ENCODE measurements at regions of chr11 and their contacts with region 1.

Region 1: GRCh38 chr11:57456960-57457642 is 3.2 kb upstream of the RTN4RL2 start:
- DNase-seq: peak; percentile 93
- H3K4me3 Mint-ChIP-seq: peak overlapping the region; percentile 62
- H3K27ac Mint-ChIP-seq: peak overlapping the region; percentile 29
- H3K4me1 Mint-ChIP-seq: peaks cover 26% of the 10 kb centered on the region
- H3K27me3 Mint-ChIP-seq: peaks cover 52% of the 10 kb centered on the region

Region 2: DNA sequence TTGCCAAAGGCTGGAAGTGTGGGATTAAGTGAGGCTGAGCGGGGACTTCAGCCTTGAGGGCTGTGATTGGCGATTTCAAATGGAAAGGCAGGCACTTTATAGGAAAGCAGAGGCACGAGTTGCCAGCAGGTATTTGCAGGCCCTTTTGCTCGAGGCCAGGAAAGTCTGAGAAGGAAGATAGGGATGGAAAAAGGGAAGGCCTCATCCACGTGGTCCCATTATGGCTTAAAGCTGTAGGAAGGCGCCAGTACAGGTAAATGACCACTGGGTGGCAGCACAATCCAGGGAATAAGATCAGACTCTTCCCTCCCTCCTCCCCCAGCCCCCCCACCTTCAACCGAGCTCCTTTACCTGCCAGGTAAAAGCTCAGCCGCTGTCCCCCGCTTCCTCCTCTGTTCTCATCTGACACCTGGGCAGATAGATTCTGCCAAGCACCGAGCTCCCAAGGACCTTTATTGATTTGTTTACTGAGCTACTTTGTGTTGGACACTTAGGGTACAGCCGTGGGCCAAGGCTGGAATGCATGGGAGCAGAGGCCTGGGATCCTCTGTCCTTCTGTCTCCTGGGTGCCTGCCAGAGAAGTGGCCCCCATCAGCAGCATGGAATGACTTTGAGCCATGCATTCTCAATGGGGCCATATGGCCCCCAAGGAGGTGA is 111.4 kb before region 1 on chr11:
- intact Hi-C with region 1: loop called (anchors 1 kb)
- DNase-seq: peak; percentile 89
- H3K4me3 Mint-ChIP-seq: no peak overlapping the region
- H3K27ac Mint-ChIP-seq: no peak overlapping the region
- H3K4me1 Mint-ChIP-seq: peaks cover 7% of the 10 kb centered on the region
- H3K27me3 Mint-ChIP-seq: peaks cover 16% of the 10 kb centered on the region

Region 3: DNA sequence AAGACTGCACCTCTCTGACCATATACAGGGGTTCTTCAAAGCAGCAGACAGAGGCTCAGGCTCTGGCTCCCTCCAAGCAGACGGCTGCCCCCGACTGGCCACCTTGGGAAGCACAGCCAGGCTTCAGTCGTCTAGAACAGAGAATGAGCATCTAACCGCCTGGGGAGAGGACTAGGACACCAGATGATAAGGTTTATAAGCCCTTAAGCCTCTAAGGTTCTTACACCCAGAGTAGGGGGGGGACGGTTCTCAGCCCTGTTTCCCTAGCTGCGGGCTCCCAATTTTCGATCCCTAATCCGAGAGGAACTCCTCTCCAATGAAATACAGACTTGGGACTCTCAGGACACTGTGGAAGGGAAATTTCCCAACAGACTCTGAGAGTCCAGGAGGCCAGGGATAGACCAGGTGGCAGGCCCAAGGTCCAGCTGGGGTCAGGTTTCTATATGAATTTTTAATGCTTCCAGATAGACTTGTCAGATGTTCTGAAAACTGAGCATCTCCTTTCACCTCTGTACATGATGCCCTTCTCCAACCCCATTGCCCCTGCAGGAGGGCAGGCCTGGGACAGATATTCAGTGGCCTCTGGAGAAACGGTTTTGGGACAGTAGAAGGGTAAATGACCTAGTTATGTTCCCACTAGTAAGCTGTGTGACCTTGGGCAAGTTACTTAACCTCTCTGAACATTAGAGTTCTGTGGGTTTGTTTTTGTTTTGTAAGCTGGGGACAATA is 23.5 kb after region 1 on chr11:
- intact Hi-C with region 1: loop called (anchors 1 kb)
- DNase-seq: peak; percentile 92
- H3K4me3 Mint-ChIP-seq: no peak overlapping the region
- H3K27ac Mint-ChIP-seq: no peak overlapping the region
- H3K4me1 Mint-ChIP-seq: peaks cover 8% of the 10 kb centered on the region
- H3K27me3 Mint-ChIP-seq: peaks cover 52% of the 10 kb centered on the region

Region 4: DNA sequence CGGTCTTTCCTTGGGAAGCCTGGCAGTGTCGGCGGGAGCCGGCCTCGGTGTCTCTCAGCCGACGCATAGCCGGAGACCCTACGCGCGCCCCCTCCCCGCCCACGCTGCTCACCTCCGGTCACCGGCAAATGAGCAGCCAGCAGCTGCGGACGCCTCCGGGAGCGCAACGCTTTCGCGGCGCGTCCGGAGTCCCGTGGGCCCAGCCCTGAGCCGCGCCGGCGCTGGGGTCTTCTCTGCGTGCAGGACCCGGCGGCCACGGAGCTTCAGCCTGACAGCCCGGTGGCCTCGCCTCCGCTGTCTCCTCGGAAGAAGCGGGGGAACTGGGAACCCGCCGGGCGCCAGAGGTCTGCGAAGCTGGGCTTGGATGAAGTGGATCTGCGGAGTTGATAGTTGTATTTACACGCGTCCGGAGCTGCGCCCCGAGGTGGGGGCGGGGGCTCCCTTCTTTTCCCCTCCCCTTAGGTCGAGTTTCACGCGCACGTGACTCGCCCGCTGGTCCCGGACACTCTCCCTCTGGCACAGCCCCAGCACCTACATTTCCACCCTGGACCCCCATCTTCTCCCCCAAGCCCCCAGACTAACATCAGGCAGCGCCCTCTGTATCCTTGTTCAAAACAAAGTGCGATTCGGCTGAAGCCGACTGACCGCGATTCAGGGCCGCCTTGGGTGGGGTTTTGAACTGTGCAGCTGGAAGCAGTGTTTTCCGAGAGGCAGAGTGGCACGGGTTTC is 58.4 kb after region 1 on chr11 and contains the start of gene SLC43A1:
- intact Hi-C with region 1: loop called (anchors 2 kb)
- DNase-seq: peak; percentile 83
- H3K4me3 Mint-ChIP-seq: peak within 1 kb of the TSS; percentile 97
- H3K27ac Mint-ChIP-seq: peak within 1 kb of the TSS; percentile 91
- H3K4me1 Mint-ChIP-seq: peaks cover 27% of the 10 kb centered on the region
- H3K27me3 Mint-ChIP-seq: peaks cover 4% of the 10 kb centered on the region
- total RNA-seq, gene SLC43A1: 35.3 and 35.8 TPM in 2 replicates

Region 5: DNA sequence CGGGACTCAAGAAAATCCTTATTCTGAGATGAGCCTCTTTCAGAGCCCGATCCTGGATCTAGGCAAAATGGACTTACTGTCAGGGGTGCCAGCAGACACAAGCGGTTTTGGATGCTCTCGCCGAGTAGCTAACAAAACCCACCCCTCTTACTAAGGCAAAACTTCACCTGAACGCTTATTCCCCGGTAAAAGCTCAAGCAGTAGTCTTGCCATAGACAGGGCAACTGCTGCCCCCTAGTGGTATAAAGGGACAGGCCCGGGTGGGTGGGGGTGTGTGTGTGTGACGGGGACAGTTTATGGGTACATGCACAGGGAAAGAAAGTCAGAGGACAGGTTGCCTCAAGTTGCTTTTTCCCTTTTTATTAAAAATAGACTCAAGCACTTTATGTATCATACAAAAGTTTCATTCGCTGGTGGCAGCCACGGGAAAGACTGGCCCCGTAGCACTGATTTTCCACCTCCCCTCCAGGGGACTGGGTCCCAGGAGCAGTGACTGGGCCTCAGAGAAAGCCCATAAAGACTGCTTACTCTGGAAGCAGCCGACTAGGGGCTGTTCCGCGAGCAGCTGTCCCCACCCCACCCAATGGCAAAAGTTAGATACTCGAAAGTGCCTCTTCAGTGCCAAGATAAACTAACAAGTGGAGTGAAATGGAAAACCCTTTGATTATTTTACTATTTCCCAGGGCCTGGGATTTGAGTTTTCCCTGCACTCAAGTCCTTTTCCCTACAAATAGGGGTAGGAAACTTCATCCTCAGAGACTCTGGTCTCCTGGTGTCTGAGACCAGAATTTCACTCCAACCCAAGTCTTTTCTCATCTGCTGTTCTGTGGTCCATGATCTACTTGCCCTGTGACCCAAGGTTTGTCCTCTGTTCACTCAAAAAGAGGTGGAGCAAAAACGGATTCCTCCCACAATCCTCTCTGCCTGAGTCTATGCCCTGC is 187.9 kb after region 1 on chr11:
- intact Hi-C with region 1: loop called (anchors 2 kb)
- DNase-seq: peak; percentile 96
- H3K4me3 Mint-ChIP-seq: no peak overlapping the region
- H3K27ac Mint-ChIP-seq: no peak overlapping the region
- H3K4me1 Mint-ChIP-seq: peaks cover 48% of the 10 kb centered on the region
- H3K27me3 Mint-ChIP-seq: peaks cover 40% of the 10 kb centered on the region

Measured in activated CD4-positive, alpha-beta T cell treated with anti-CD3 and anti-CD28 coated beads, Interleukin-2, amount 10 ng/mL, durations not matched to agents 24 days and 14 days (primary cell).